ENCODE measurements at regions of chr5 and their contacts with region 1.

Region 1: DNA sequence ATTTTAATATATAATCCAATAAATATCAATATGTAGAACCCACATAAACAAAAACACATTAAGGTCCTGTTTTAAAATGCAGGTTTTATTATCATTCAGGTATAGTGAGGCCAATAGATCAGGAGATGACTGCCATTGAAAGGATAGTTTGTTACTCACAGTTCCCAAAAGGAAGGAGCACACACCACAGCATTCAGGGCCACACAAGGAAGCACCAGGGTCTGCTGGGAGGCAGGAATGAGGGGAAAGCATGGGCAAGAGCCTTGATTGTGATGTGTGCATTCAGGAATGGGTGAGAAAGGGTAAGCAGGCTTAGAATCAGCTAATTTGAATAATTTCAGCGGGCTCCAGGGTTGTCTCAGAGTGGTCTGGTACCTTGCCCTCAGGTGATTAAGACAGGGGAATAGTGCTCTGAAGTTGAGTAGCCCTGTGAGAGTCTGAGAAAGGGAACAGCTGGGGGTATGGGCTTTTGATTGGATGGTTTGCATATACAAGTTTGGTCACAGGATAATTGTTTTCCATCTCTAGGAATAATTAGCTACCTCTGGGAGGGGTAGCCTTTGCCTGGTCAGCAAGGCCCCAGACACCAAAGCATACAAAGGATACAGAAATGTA is 19.8 kb upstream of the OTULIN start:
- DNase-seq: no peak
- ATAC-seq: no peak
- H3K4me3 ChIP-seq: no peak overlapping the region
- H3K4me3 Mint-ChIP-seq: no peak overlapping the region
- H3K27ac ChIP-seq: no peak overlapping the region
- H3K27ac Mint-ChIP-seq: no peak overlapping the region
- H3K4me1 ChIP-seq: peaks cover 4% of the 10 kb centered on the region
- H3K4me1 Mint-ChIP-seq: no peaks in the 10 kb centered on the region
- H3K27me3 ChIP-seq: no peaks in the 10 kb centered on the region
- H3K27me3 Mint-ChIP-seq: peaks cover 11% of the 10 kb centered on the region
- CTCF ChIP-seq: no peak

Region 2: GRCh38 chr5:13987843-13988464 is 656.8 kb before region 1 on chr5:
- CTCF ChIA-PET with region 1: no interaction called
- POLR2A ChIA-PET with region 1: no interaction called
- intact Hi-C with region 1: loop called in 1 of 2 experiments (anchors 10 kb)
- DNase-seq: peak in 2 of 9 experiments; percentile 12 to 18
- ATAC-seq: no peak
- H3K4me3 ChIP-seq: no peak overlapping the region
- H3K4me3 Mint-ChIP-seq: no peak overlapping the region
- H3K27ac ChIP-seq: no peak overlapping the region
- H3K27ac Mint-ChIP-seq: no peak overlapping the region
- H3K4me1 ChIP-seq: no peaks in the 10 kb centered on the region
- H3K4me1 Mint-ChIP-seq: no peaks in the 10 kb centered on the region
- H3K27me3 ChIP-seq: peaks cover 0 to 2% of the 10 kb centered on the region in 2 experiments
- H3K27me3 Mint-ChIP-seq: peaks cover 6% of the 10 kb centered on the region
- CTCF ChIP-seq: no peak

Region 3: GRCh38 chr5:14351845-14352712 is 292.7 kb before region 1 on chr5:
- CTCF ChIA-PET with region 1: interaction called, 283 read pairs
- POLR2A ChIA-PET with region 1: no interaction called
- intact Hi-C with region 1: loop called (anchors 1 kb)
- DNase-seq: peak; percentile 26 to 76 (median 59)
- ATAC-seq: peak; percentile 95
- H3K4me3 ChIP-seq: no peak overlapping the region
- H3K4me3 Mint-ChIP-seq: no peak overlapping the region
- H3K27ac ChIP-seq: no peak overlapping the region
- H3K27ac Mint-ChIP-seq: no peak overlapping the region
- H3K4me1 ChIP-seq: no peaks in the 10 kb centered on the region
- H3K4me1 Mint-ChIP-seq: no peaks in the 10 kb centered on the region
- H3K27me3 ChIP-seq: no peaks in the 10 kb centered on the region
- H3K27me3 Mint-ChIP-seq: peaks cover 3% of the 10 kb centered on the region
- CTCF ChIP-seq: peak; percentile 87

Region 4: GRCh38 chr5:14383923-14384322 is 260.8 kb before region 1 on chr5:
- CTCF ChIA-PET with region 1: interaction called, 18 read pairs
- POLR2A ChIA-PET with region 1: no interaction called
- intact Hi-C with region 1: no loop called
- DNase-seq: no peak
- ATAC-seq: no peak
- H3K4me3 ChIP-seq: no peak overlapping the region
- H3K4me3 Mint-ChIP-seq: no peak overlapping the region
- H3K27ac ChIP-seq: no peak overlapping the region
- H3K27ac Mint-ChIP-seq: no peak overlapping the region
- H3K4me1 ChIP-seq: no peaks in the 10 kb centered on the region
- H3K4me1 Mint-ChIP-seq: peaks cover 8% of the 10 kb centered on the region
- H3K27me3 ChIP-seq: no peaks in the 10 kb centered on the region
- H3K27me3 Mint-ChIP-seq: peaks cover 7% of the 10 kb centered on the region
- CTCF ChIP-seq: no peak

Region 5: GRCh38 chr5:14655146-14655741 is 10.5 kb after region 1 on chr5:
- CTCF ChIA-PET with region 1: interaction called, 19 read pairs
- POLR2A ChIA-PET with region 1: no interaction called
- intact Hi-C with region 1: no loop called
- DNase-seq: no peak
- ATAC-seq: peak; percentile 26
- H3K4me3 ChIP-seq: no peak overlapping the region
- H3K4me3 Mint-ChIP-seq: no peak overlapping the region
- H3K27ac ChIP-seq: no peak overlapping the region
- H3K27ac Mint-ChIP-seq: no peak overlapping the region
- H3K4me1 ChIP-seq: no peaks in the 10 kb centered on the region
- H3K4me1 Mint-ChIP-seq: peaks cover 14% of the 10 kb centered on the region
- H3K27me3 ChIP-seq: no peaks in the 10 kb centered on the region
- H3K27me3 Mint-ChIP-seq: no peaks in the 10 kb centered on the region
- CTCF ChIP-seq: no peak

Region 6: DNA sequence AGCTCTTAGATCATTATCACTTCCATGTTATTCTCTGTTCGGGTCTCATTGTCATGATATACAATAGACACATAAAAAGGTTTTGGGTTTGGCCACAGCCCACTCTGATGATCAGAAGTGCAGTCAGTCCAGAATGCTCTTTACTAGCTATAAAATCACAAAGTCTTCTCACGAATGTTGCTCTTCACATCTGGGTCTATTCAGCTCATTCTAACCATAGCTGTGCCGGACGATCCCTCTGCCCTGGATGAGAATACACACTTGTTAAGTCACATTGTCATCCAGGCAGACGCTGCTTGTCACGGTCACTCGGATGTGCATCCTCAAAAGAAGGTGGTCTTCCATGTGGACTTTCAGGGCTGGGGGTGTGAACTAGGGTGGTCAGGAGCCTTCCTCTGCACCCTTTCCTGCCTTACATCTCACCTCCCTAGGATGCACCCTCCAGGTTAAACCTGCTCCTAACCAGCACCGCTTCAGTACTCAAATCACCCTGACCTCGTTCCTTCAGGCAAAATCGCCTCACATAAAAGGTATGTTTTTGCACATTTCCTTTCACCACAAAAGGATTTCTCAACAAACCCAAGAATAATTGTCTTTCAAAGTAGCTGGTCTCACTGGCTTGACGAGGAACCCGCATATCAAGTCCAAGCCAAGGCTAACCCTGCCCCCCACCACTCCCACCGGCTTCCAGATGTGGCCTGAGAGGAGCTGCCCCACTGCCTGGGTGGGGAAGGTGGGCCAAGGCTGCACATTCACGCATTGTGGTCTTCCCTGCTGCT is 205.0 kb after region 1 on chr5:
- CTCF ChIA-PET with region 1: no interaction called
- POLR2A ChIA-PET with region 1: no interaction called
- intact Hi-C with region 1: no loop called
- DNase-seq: no peak
- ATAC-seq: no peak
- H3K4me3 ChIP-seq: no peak overlapping the region
- H3K4me3 Mint-ChIP-seq: no peak overlapping the region
- H3K27ac ChIP-seq: no peak overlapping the region
- H3K27ac Mint-ChIP-seq: no peak overlapping the region
- H3K4me1 ChIP-seq: no peaks in the 10 kb centered on the region
- H3K4me1 Mint-ChIP-seq: peaks cover 20% of the 10 kb centered on the region
- H3K27me3 ChIP-seq: no peaks in the 10 kb centered on the region
- H3K27me3 Mint-ChIP-seq: no peaks in the 10 kb centered on the region
- CTCF ChIP-seq: no peak